Ascending aorta (tissue), 2 donors: ENCODE measurements at regions of chr14 and their contacts with region 1.

Region 1: DNA sequence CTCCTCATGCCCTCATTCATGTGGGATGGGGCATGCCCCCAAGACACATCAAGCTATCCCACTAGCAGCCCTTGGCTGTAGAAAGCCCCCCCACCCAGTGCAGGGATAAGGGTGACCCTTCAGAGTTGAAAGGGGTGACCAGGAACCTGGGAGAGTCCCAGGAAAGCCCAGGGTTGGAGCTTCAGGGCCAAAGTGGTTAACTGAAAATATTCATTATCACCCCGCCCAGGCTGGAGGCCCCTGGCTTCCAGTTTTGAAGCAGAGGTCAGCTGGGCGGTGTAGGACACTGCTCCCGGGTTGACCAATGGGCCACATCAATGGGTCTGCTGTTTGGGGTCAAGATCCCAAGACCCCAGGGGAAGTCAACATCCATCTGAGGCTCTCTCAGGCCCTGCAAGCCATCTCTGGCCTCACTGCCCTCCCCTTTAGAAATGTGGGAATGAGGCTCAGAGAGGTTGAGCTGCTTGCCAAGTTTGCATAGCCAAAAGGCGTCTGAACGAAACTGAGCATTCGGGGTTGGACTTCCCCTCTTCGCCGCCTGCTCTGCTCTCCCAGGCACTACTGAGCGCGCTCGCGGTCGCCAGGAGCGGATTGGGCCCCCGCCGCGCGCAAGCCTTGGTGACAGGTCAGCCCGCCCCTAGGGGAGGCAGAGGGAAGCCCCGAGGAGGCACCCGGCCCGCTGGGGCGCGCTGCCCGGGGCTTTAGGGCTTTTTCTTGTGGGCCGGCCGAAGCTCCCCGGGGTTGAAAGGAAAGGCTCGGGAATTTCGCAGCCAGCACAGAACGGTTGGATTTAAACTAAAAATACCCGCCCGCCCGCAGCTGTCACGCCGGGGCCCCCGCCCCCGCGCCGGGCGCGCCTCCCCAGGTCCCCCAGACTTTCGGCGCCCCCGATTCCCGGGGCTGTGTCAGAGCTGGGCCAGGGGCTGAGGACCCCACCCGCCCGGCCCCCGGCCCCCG is 576 bp downstream of the SYNE3 start:
- DNase-seq: peak in 1 of 2 donors; percentile 90
- H3K4me3 ChIP-seq: peak overlapping the region; percentile 76 to 79
- H3K27ac ChIP-seq: peak overlapping the region; percentile 85 to 90
- H3K4me1 ChIP-seq: peaks cover 32 to 57% of the 10 kb centered on the region in 2 donors
- H3K27me3 ChIP-seq: no peaks in the 10 kb centered on the region
- CTCF ChIP-seq: peak; percentile 43 to 49 (median 45)

Region 2: GRCh38 chr14:93984987-93985410 is 1530.9 kb before region 1 on chr14:
- intact Hi-C with region 1: loop called (anchors 10 kb)
- DNase-seq: peak in 1 of 2 donors; percentile 84
- H3K4me3 ChIP-seq: no peak overlapping the region
- H3K27ac ChIP-seq: peak overlapping the region; percentile 41 to 51
- H3K4me1 ChIP-seq: peaks cover 3 to 50% of the 10 kb centered on the region in 2 donors
- H3K27me3 ChIP-seq: no peaks in the 10 kb centered on the region
- CTCF ChIP-seq: peak; percentile 21 to 57 (median 38)

Region 3: GRCh38 chr14:94173885-94174603 is 1341.8 kb before region 1 on chr14 and contains the start of gene PPP4R4:
- intact Hi-C with region 1: loop called (anchors 10 kb)
- DNase-seq: peak; percentile 63 to 92
- H3K4me3 ChIP-seq: peak within 1 kb of the TSS; percentile 75 to 84
- H3K27ac ChIP-seq: peak within 1 kb of the TSS; percentile 50 to 61
- H3K4me1 ChIP-seq: peaks cover 3 to 14% of the 10 kb centered on the region in 2 donors
- H3K27me3 ChIP-seq: no peaks in the 10 kb centered on the region
- CTCF ChIP-seq: no peak
- total RNA-seq, gene PPP4R4: not detected

Region 4: DNA sequence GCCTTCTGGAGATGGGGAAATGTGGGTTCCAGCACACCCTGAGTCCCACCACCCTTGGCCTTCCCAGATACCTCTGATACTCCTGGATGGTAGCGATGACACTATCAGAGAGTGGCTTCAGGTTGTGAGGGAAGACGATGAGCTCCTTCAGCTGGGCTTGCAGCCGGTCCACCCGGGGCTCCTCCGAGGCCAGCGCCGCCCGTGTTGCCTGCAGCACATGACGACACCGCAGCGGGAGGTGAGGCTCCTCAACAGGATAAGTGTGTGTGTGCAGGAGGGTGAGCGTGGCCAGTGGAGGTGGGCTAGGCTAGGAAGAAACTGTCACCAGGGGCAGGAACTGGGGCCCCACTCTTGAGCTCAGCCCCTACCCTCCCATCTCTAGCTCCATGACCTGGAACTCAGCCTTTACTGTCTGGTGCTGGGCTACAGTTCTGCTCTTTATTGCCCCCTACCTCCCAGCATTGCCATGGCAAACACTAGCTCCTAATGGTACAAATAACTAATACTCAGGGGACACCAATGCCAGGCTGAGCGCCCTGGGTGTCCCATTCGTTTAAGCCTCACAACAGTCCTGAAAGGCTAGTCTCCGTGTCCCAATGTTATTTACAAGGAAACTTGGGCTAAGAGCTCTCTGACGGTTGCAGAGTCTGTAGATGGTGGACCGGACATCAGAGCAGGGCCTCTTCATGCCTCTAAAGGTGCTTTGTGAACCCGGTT is 63.5 kb before region 1 on chr14:
- intact Hi-C with region 1: no loop called
- DNase-seq: no peak
- H3K4me3 ChIP-seq: no peak overlapping the region
- H3K27ac ChIP-seq: no peak overlapping the region
- H3K4me1 ChIP-seq: peaks cover 0 to 2% of the 10 kb centered on the region in 2 donors
- H3K27me3 ChIP-seq: no peaks in the 10 kb centered on the region
- CTCF ChIP-seq: no peak

Region 5: DNA sequence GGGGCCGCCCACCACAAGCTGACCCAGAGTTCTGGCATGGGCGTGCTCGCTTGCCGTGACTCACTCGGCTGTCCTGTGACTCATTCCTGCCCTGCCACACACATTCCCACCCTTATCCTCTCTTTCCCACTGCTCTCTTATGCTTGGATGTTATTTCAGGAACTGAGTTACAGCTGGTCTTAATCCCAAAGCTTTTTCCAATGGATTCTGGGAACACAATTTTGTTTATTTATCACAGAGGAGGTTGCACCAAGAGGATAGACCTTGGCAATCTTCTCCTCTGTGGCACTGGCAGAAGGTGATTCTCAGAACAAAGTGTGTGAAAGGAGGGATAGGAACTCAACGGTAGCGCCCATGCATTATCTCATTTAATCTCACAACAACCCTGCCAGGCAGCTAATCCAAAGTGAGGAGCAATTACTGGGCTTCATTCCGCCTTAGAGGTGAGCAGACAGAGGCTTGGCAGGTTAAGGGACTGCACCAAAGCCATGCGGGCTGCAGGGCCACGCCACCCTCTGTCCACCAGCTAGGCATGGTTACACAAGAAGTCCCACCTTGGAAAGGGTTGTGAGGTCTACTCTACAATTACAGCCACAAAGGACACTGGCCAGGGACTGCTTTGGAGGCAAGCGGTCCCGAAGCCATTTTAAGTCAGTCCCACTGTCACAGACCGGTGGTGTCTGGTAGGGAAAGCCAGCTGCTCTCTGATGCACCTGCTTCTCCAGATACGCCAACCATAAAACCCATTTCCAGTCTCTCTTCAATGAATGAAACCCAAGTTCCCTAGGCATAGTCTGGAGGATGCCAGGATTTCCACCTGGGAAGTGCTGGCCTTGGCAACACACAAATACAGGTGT is 32.3 kb before region 1 on chr14:
- intact Hi-C with region 1: loop called (anchors 2 kb)
- DNase-seq: peak; percentile 64 to 94
- H3K4me3 ChIP-seq: no peak overlapping the region
- H3K27ac ChIP-seq: peak overlapping the region; percentile 78 to 82
- H3K4me1 ChIP-seq: peaks cover 6 to 24% of the 10 kb centered on the region in 2 donors
- H3K27me3 ChIP-seq: no peaks in the 10 kb centered on the region
- CTCF ChIP-seq: no peak

Region 6: DNA sequence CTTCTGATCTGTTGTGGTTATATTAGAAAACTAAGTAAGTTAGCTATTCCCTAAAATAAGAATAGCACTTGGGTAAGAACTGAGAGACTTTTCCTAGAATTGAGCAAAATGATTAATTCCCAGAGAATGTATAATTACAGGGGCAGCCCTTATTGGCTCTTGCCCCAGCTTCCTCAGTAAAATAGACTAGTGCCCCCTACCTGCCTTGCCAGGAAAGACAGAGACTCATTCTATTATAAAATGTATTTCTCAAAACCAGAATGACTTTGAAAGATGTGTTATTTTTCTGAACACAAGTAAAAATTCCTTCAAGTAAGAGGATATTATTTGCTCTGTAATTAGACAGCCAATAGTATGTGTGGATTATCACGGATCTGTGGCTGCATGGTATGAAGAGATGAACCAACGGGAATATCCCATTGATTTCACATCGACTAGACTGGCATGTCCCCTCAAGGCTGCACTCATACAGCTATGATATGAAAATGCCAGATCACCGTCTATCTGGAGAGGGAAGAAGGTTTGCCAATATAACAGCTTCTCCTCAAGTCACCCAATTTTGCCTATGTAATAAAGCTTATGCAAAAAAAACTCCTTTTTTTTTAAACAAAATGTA is 11.6 kb after region 1 on chr14:
- intact Hi-C with region 1: loop called (anchors 1 kb)
- DNase-seq: peak in 1 of 2 donors; percentile 89
- H3K4me3 ChIP-seq: peak overlapping the region in 1 of 2 donors; percentile 36
- H3K27ac ChIP-seq: peak overlapping the region; percentile 81 to 83
- H3K4me1 ChIP-seq: peaks cover 11 to 60% of the 10 kb centered on the region in 2 donors
- H3K27me3 ChIP-seq: no peaks in the 10 kb centered on the region
- CTCF ChIP-seq: peak; percentile 76 to 87 (median 84)

Region 7: GRCh38 chr14:95538798-95539509 is 23.1 kb after region 1 on chr14:
- intact Hi-C with region 1: no loop called
- DNase-seq: no peak
- H3K4me3 ChIP-seq: no peak overlapping the region
- H3K27ac ChIP-seq: no peak overlapping the region
- H3K4me1 ChIP-seq: peaks cover 13 to 14% of the 10 kb centered on the region in 2 donors
- H3K27me3 ChIP-seq: no peaks in the 10 kb centered on the region
- CTCF ChIP-seq: no peak

Region 8: DNA sequence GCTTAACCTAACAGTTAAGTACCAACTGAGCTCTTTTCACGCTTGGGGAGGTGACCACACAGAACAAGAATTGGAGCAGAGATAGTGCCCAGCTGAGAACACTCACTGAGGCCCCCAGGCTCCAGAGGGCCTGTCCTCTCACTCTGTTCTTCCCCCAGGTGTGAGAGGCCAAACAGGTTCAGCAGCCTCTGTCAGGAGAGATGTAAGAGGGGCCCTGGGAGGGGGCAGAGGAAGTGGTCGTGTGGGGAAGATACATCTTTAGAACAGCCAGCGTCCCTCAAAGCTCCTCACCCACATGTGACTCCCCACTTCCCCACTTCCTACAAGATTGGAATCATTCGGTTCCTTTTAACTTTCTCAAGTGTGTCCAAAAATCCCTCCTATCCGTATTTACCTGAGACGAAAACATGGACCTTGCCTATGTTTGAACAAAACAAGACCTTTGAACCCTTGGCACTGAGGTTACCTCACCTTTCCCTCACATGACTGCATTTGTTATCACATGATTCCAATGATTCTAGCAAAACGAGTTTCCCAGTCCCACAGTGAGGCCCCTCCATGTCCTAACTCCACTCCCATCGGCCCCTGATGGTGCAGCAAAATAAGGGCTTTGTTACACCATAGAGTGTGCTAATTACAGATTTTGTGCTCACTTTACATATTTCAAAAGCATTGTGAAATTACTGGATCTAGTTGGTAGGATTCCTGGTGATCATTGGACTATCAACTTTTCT is 946.2 kb after region 1 on chr14:
- intact Hi-C with region 1: no loop called
- DNase-seq: no peak
- H3K4me3 ChIP-seq: no peak overlapping the region
- H3K27ac ChIP-seq: no peak overlapping the region
- H3K4me1 ChIP-seq: no peaks in the 10 kb centered on the region
- H3K27me3 ChIP-seq: no peaks in the 10 kb centered on the region
- CTCF ChIP-seq: no peak